A549 (cell line): ENCODE measurements at regions of chr1 and their contacts with region 1.

Region 1: DNA sequence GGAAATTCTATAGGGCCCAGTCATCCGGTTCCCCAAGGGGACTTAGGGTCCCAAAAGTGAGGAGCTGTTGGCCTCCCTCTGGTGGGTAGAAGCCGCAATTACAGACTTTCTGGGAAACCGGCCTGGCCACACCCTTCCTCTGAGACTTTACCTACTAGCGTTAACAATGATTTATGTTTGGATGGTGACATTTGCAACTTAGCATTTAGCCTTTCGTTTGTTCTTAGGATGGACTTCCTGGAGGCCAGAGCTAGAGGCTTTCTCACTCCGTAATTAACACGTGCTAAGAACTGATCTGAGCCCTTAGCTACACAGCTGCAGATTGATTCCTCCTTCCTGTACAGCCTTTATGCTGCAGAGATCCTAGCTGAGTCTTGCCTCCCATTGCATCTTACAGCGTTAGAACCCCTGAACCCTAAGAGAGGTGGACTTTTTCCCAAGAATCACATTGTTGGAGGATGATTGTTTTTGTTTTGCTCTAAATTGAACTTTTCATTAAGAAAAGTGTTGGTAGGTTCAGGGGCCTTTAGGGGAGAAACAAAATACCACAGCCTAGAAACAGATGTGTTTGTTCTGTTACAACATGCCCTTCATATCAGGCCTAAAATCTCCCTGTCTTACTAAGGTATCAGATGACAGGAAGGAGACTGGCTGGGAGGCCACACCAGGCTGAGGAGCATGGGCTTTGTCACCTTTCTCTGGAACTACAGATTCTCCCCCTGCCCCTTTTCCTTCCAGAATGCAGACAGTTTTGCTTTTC is 2.0 kb downstream of the S100A11 start:
- DNase-seq: peak; percentile 80 to 86
- ATAC-seq: peak; percentile 44 to 59
- H3K4me3 ChIP-seq: peak overlapping the region; percentile 78
- H3K27ac ChIP-seq: peak overlapping the region; percentile 98 to 100
- H3K4me1 ChIP-seq: peaks cover 31% of the 10 kb centered on the region
- CTCF ChIP-seq: peak; percentile 73
- EP300 ChIP-seq: no peak
- POLR2A ChIP-seq: no peak
- RAD21 ChIP-seq: peak; percentile 44 to 54

Region 2: GRCh38 chr1:151909150-151910149 is 125.4 kb before region 1 on chr1 and contains the start of gene THEM4:
- CTCF ChIA-PET with region 1: interaction called, 7 read pairs
- POLR2A ChIA-PET with region 1: interaction called, 13 read pairs
- DNase-seq: peak; percentile 95 to 99
- ATAC-seq: peak; percentile 99
- H3K4me3 ChIP-seq: peak within 1 kb of the TSS; percentile 56
- H3K27ac ChIP-seq: peak within 1 kb of the TSS; percentile 88 to 92
- H3K4me1 ChIP-seq: no peaks in the 10 kb centered on the region
- CTCF ChIP-seq: peak; percentile 21
- EP300 ChIP-seq: no peak
- POLR2A ChIP-seq: peak; percentile 90
- RAD21 ChIP-seq: peak in 1 of 2 experiments; percentile 38; a peak in 1 of 5 replicates
- polyA plus RNA-seq, gene THEM4: 28.1 and 32.3 TPM in 2 replicates

Region 3: DNA sequence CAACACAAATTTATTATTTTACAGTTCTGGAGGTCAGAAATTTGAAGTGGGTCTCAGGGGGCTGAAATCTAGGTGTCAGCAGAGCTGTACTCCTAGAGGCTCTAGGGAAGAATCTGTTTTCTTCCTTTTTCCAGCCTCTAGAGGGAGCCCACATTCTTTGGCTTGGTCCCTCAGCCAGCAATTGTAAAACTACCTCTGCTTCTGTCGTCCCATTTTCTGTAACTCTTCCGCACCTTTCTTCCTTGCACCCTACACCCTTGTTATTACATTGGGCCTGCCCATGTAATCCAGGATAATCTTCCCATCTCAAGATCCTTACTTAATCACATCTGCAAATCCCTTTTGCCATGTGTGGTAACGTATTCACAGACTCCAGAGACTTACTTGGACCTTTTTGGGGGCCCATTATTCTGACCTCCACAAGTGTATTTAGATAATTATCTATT is 100.8 kb before region 1 on chr1:
- CTCF ChIA-PET with region 1: interaction called, 49 read pairs
- POLR2A ChIA-PET with region 1: no interaction called
- DNase-seq: peak; percentile 54 to 76
- ATAC-seq: peak; percentile 94 to 97
- H3K4me3 ChIP-seq: no peak overlapping the region
- H3K27ac ChIP-seq: peak overlapping the region in 1 of 2 experiments; percentile 43; a peak in 1 of 6 replicates
- H3K4me1 ChIP-seq: peaks cover 33% of the 10 kb centered on the region
- CTCF ChIP-seq: peak; percentile 98
- EP300 ChIP-seq: no peak
- POLR2A ChIP-seq: no peak
- RAD21 ChIP-seq: peak; percentile 98 to 99

Region 4: GRCh38 chr1:151993654-151994496 is 41.0 kb before region 1 on chr1 and contains the start of gene S100A10:
- CTCF ChIA-PET with region 1: interaction called, 12 read pairs
- POLR2A ChIA-PET with region 1: interaction called, 9 read pairs
- DNase-seq: peak in 1 of 2 experiments; percentile 88
- ATAC-seq: peak; percentile 51 to 67
- H3K4me3 ChIP-seq: peak within 1 kb of the TSS; percentile 87
- H3K27ac ChIP-seq: peak within 1 kb of the TSS; percentile 97
- H3K4me1 ChIP-seq: peaks cover 59% of the 10 kb centered on the region
- CTCF ChIP-seq: no peak
- EP300 ChIP-seq: no peak
- POLR2A ChIP-seq: peak; percentile 89
- RAD21 ChIP-seq: no peak; a peak in 1 of 5 replicates
- polyA plus RNA-seq, gene S100A10: 505 and 515 TPM in 2 replicates

Region 5: GRCh38 chr1:152013664-152014237 is 21.1 kb before region 1 on chr1:
- CTCF ChIA-PET with region 1: interaction called, 34 read pairs
- POLR2A ChIA-PET with region 1: no interaction called
- DNase-seq: peak in 1 of 2 experiments; percentile 72
- ATAC-seq: peak; percentile 83 to 91; a peak in 5 of 6 replicates
- H3K4me3 ChIP-seq: no peak overlapping the region
- H3K27ac ChIP-seq: 0 out of 6 replicates have a peak overlapping the region, but pooled peaks of 1 of the 2 experiments have one; percentile 32
- H3K4me1 ChIP-seq: no peaks in the 10 kb centered on the region
- CTCF ChIP-seq: peak; percentile 70
- EP300 ChIP-seq: no peak
- POLR2A ChIP-seq: no peak
- RAD21 ChIP-seq: peak; percentile 63 to 73

Region 6: DNA sequence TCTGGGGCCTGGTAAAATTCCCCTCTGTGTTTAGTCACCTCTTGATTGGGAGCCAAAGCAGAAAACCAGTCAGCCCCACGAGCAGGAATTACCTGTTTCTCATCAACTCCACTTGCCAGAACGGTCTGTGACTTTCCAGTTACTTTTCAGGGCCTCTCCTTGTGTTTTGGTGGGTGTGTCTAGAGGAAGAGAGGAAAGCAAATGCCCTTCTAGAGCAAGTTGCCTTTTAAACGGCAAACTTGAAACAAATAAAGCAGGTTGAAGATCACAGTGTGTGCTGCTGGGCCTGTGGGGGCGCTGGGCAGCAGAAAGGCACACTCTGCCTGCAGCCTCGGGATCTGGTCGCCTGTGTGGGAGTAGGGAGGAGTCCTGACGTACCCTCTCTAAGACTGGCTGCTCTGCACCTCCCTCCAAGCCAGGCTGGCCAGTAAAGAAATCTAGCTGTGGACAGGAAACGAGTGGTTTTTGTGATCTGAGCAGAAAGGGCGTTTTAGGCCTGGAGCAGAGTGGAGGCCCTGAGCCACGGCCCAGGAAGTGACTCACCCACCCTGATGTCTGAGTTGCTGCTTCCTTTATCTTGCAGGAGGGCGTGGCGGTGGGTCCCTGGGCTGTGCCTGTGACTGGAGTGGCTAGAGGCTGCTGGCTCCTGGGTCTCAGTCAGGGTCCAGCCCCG is 13.0 kb after region 1 on chr1:
- CTCF ChIA-PET with region 1: interaction called, 68 read pairs
- POLR2A ChIA-PET with region 1: interaction called, 118 read pairs
- DNase-seq: peak; percentile 83 to 100
- ATAC-seq: peak; percentile 95
- H3K4me3 ChIP-seq: peak overlapping the region; percentile 43
- H3K27ac ChIP-seq: peak overlapping the region; percentile 95 to 96
- H3K4me1 ChIP-seq: peaks cover 45% of the 10 kb centered on the region
- CTCF ChIP-seq: peak; percentile 57; the same call in 2 of the 3 replicates
- EP300 ChIP-seq: no peak; a peak in 1 of 5 replicates
- POLR2A ChIP-seq: peak; percentile 66
- RAD21 ChIP-seq: peak; percentile 32 to 45; a peak in 4 of 5 replicates

Region 7: GRCh38 chr1:152078831-152079441 is 44.1 kb after region 1 on chr1:
- CTCF ChIA-PET with region 1: no interaction called
- POLR2A ChIA-PET with region 1: no interaction called
- DNase-seq: no peak
- ATAC-seq: no peak
- H3K4me3 ChIP-seq: no peak overlapping the region
- H3K27ac ChIP-seq: no peak overlapping the region
- H3K4me1 ChIP-seq: no peaks in the 10 kb centered on the region
- CTCF ChIP-seq: no peak
- EP300 ChIP-seq: no peak
- POLR2A ChIP-seq: no peak
- RAD21 ChIP-seq: no peak

Region 8: DNA sequence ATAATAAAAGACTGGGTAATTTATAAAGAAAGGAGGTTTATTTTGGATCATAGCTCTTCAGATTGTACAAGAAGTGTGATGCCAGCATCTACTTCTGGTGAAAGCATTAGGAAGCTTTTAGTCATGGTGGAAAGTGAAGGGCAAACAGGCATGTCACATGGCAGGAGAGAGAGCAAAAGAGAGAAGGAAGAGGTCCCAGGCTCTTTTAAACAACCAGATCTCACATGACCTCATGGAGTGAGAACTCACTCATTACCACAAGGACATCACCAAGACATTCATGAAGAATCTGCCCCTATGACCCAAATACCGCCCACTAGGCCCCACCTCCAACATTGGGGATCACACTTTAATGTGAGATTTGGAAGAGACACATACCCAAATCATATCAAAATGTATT is 114.2 kb after region 1 on chr1:
- CTCF ChIA-PET with region 1: no interaction called
- POLR2A ChIA-PET with region 1: no interaction called
- DNase-seq: no peak
- ATAC-seq: no peak
- H3K4me3 ChIP-seq: no peak overlapping the region
- H3K27ac ChIP-seq: no peak overlapping the region
- H3K4me1 ChIP-seq: no peaks in the 10 kb centered on the region
- CTCF ChIP-seq: no peak
- EP300 ChIP-seq: no peak
- POLR2A ChIP-seq: no peak
- RAD21 ChIP-seq: no peak